Prostate gland (tissue), 2 donors: ENCODE measurements at regions of chr19 and their contacts with region 1.

Region 1: DNA sequence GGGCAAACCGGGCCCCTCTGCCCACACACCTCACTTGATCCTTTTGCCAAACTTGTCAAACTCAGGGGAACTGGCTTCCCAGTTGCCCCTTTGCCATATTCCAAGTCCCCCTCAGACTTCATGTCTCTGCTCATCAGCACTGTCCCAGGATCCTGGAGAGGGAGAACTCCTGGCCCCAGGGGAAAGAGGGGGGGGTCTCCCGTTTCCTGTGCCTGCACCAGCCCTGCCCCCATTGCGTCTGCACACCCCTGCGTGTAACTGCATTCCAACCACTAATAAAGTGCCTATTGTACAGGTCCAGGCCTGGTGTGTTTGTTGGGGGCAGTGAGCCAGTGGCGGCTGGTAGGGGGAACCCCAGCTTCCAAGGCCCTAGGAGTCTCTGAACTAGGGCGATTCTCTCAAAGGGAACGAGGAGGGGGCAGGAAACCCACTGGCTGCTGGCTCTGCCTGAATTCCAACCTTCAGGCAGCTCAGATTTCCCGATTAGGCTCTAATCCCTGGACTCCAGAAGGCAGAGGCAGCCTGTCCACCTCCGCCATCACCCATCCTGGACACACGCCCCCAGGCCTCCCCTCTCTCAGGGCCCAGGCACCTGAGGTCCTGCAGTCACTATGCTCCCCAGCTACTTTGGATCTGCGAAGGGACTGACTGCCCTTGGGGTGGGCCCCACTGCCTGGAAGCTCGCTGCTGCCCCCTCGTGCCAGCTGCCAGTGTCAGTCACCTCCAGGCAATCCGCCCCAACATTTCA is 9.7 kb upstream of the ILF3 start:
- DNase-seq: peak; percentile 84
- H3K4me3 ChIP-seq: no peak overlapping the region
- H3K27ac ChIP-seq: peak overlapping the region; percentile 63 to 65
- H3K4me1 ChIP-seq: peaks cover 5% of the 10 kb centered on the region
- H3K27me3 ChIP-seq: no peaks in the 10 kb centered on the region
- CTCF ChIP-seq: peak; percentile 65 to 94 (median 83)
- POLR2A ChIP-seq: no peak

Region 2: GRCh38 chr19:10580979-10581631 is 63.3 kb before region 1 on chr19:
- intact Hi-C with region 1: loop called (anchors 1 kb)
- DNase-seq: peak; percentile 85
- H3K4me3 ChIP-seq: no peak overlapping the region
- H3K27ac ChIP-seq: no peak overlapping the region
- H3K4me1 ChIP-seq: no peaks in the 10 kb centered on the region
- H3K27me3 ChIP-seq: no peaks in the 10 kb centered on the region
- CTCF ChIP-seq: peak; percentile 96 to 99 (median 98)
- POLR2A ChIP-seq: no peak

Region 3: GRCh38 chr19:10748924-10749434 is 104.5 kb after region 1 on chr19:
- intact Hi-C with region 1: no loop called
- DNase-seq: peak; percentile 39
- H3K4me3 ChIP-seq: no peak overlapping the region
- H3K27ac ChIP-seq: peak overlapping the region; percentile 58 to 68
- H3K4me1 ChIP-seq: peaks cover 29% of the 10 kb centered on the region
- H3K27me3 ChIP-seq: no peaks in the 10 kb centered on the region
- CTCF ChIP-seq: no peak
- POLR2A ChIP-seq: no peak